Colonic mucosa (tissue), 4 donors: ENCODE measurements at regions of chr1 and their contacts with region 1.

Region 1: DNA sequence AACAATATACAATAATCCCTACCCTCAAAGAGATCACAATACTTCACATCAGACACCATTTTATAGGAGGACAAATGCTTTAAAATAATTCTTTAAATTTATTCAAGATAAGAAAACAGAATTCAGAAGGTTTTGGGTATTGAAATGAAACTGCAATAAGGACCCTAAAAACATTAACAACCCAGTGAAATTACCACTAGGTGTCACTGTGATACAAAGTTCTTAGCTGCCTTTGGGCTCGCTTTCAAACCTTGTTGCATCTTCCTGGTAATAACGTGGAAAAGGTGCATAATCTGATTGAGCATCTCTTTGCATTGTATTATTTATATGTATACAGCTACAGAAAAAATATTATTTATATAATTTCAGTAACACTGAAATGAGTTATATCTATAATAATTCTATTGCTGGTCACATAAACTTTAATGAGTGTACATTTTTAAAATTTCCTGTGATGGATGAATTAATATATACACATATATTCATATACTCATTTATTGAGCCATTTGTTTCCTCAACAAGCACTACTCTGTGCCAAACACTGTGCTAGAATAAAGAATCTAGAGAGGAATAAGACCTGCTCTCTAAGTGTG is 185.2 kb downstream of the FAF1 start:
- DNase-seq: no peak
- H3K4me3 ChIP-seq: no peak overlapping the region
- H3K27ac ChIP-seq: no peak overlapping the region
- H3K4me1 ChIP-seq: no peaks in the 10 kb centered on the region
- H3K27me3 ChIP-seq: no peaks in the 10 kb centered on the region
- CTCF ChIP-seq: peak; percentile 77

Region 2: GRCh38 chr1:50644447-50645105 is 130.3 kb before region 1 on chr1:
- intact Hi-C with region 1: no loop called
- DNase-seq: no peak
- H3K4me3 ChIP-seq: no peak overlapping the region
- H3K27ac ChIP-seq: no peak overlapping the region
- H3K4me1 ChIP-seq: no peaks in the 10 kb centered on the region
- H3K27me3 ChIP-seq: no peaks in the 10 kb centered on the region
- CTCF ChIP-seq: no peak

Region 3: DNA sequence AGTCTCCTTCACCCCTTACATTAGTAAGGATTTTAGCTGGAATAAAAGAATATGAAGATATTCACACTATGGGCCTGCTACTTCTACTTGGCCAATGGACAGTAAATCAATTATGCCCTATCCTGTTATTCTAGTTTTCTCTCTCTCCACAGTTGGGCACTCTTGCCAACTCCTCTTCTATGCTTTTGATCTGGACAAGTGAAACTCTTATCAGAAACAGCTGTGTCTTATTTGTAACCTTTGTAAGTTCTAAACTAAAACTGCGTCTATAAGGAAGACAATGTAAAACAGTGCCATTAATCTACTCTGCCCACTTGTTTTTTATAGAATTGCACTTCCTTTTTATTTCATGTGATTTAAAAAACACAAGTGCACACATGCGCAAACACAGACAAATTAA is 107.6 kb before region 1 on chr1:
- intact Hi-C with region 1: no loop called
- DNase-seq: no peak
- H3K4me3 ChIP-seq: no peak overlapping the region
- H3K27ac ChIP-seq: no peak overlapping the region
- H3K4me1 ChIP-seq: no peaks in the 10 kb centered on the region
- H3K27me3 ChIP-seq: no peaks in the 10 kb centered on the region
- CTCF ChIP-seq: no peak

Region 4: DNA sequence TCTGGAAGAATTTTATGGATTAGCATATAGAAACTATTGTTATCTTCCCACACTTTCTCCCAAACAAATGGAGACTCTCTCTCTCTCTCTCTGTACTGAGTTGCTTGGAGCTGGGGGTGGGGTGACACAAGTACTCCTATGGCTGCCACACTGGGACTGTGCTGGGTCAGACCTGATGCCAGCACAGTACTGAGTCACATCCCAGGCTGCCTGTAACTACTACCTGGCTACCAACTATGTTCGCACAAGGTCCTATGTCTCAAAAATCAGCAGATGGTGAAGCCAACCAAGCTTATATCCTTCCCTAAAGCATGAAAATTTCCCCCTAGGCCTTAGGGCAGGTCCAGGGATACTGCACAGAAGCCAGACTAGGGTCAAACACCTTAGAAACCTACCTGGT is 118.6 kb after region 1 on chr1:
- intact Hi-C with region 1: loop called (anchors 10 kb)
- DNase-seq: no peak
- H3K4me3 ChIP-seq: no peak overlapping the region
- H3K27ac ChIP-seq: no peak overlapping the region
- H3K4me1 ChIP-seq: no peaks in the 10 kb centered on the region
- H3K27me3 ChIP-seq: no peaks in the 10 kb centered on the region
- CTCF ChIP-seq: no peak

Region 5: DNA sequence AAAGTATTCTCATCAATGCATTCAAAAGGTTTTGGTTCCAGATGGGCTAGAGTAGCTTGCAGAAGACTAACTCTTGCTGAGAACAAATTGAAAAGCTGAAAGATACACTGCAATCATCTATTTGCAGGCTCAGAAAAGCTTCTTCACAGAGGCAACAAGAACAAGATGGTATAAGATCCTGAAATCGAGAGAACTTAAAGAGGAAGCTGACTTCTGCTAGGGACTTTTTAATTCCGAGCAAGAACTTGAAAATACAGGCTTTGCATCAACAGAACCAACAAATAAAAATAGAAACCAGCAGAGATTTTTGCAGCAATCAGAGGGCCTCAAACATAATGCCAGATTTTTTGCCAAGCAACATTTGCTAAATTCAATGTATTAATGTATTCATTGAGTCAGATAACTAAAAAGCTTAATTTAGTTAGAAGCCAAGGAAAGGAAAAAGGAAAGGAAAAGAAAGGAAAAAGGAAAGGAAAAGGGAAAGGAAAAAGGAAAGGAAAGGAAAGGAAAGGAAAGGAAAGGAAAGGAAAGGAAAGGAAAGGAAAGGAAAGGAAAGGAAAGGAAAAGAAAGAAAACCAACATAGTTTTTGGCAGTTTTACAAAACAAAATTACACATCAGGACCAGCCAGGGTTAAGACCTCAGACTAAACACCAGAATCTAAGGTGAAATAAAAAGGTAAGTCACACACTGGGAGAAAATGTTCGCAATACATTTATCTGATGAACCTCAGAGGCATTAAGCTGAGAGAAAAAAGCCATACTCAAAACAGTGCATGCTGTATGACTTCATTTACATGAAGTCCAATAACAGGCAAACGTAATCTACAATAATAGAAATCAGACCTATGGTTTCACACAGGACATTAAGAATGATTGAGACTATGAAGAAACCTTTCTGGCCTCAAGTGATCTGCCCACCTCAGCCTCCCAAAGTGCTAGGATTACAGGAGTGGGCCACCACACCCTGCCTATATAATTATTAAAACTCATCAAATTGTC is 142.6 kb after region 1 on chr1:
- intact Hi-C with region 1: no loop called
- DNase-seq: no peak
- H3K4me3 ChIP-seq: no peak overlapping the region
- H3K27ac ChIP-seq: no peak overlapping the region
- H3K4me1 ChIP-seq: no peaks in the 10 kb centered on the region
- H3K27me3 ChIP-seq: no peaks in the 10 kb centered on the region
- CTCF ChIP-seq: no peak

Region 6: DNA sequence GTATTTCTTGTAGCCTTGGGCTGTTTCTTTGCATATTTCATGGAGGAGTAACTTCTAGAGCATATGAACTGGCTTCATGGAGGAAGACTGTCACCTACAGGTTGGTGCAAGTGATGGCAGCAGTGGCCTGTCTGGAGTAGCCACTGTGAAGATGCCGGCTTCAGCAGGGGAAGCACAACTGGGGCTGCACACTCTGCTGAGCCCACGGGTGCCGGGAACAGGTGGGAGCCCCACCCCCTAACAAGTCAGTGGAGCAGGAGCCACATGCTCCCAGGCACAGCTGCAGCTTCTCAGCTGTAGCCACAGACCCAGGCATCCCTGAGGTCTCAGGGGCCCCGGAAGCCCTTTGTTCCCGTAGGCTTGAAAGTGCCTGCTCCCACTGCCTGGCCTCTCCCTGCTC is 284.0 kb after region 1 on chr1:
- intact Hi-C with region 1: loop called (anchors 10 kb)
- DNase-seq: no peak
- H3K4me3 ChIP-seq: no peak overlapping the region
- H3K27ac ChIP-seq: no peak overlapping the region
- H3K4me1 ChIP-seq: no peaks in the 10 kb centered on the region
- H3K27me3 ChIP-seq: no peaks in the 10 kb centered on the region
- CTCF ChIP-seq: peak; percentile 45

Region 7: DNA sequence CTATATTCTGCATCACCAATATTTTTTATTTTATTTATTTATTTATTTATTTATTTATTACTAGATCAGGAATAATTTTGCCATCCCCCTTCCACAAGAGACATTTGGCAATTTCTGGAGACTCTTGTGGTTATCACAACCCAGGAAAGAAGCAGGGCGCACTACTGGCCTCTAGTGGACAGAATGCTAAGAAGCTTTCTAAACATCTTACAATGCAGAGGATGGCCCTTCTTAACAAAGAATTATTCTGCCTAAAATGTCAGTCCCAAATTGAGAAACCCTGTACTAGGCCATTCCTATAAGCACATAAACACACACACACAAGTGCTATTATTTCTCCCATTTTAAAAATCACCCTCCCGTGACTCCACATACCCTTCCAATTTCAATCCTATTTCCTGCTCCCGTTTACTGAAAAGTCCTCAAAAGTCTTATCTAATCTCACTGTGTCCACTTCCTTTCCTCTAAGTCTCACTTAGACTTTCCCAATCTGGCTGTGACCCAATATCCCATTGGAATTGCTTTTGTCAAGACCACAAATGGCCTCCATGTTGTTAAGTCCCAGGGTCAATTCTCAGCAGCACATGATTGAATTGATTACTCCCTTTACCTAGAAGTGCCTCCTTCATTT is 417.5 kb after region 1 on chr1:
- intact Hi-C with region 1: loop called (anchors 5 kb)
- DNase-seq: peak; percentile 74
- H3K4me3 ChIP-seq: no peak overlapping the region
- H3K27ac ChIP-seq: no peak overlapping the region
- H3K4me1 ChIP-seq: no peaks in the 10 kb centered on the region
- H3K27me3 ChIP-seq: no peaks in the 10 kb centered on the region
- CTCF ChIP-seq: peak; percentile 76